Activated CD8-positive, alpha-beta T cell treated with anti-CD3 and anti-CD28 coated beads for 36 hours (primary cell): ENCODE measurements at regions of chr2 and their contacts with region 1.

Region 1: DNA sequence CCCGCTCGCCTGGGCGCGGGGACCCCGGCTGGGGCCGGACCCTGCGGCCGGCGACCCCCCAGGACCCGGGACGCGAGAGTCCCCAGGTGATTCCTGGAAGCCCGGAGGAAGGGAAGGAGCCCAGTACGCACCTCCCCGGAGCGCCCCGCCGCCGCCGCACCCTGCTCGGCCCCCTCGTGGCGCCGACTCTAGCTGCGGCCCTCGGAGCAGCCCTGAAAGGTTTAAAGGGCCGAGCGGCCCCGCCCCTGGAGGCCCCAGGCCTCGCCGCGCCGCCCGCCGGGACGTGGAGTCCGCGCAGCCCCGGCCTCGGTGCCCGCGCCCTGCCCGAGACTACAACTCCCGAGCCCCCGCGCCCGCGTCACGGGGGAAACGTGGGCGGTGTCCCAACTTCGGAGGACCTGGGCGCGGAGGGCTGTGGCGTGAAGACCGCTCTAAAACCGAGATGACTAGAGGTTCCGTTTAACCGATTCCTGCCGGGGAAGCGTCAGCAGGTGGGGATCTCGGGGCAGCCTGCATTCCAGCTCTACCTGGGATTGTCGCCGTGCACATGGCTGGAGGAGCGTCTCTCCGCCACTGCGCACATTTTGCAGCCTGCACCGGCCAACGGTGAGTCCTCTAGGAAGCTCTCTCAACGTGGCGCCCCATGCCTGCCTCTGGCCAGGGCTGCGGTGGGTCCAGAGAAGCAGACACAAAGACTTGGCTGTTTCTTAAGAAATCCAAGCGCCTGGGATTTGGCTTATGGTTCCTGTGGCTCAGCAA is at the start of gene TMEM150A:
- DNase-seq: peak; percentile 95
- ATAC-seq: peak; percentile 97
- H3K4me3 Mint-ChIP-seq: peak within 1 kb of the TSS; percentile 83
- H3K27ac Mint-ChIP-seq: peak within 1 kb of the TSS; percentile 60
- H3K4me1 Mint-ChIP-seq: peaks cover 44% of the 10 kb centered on the region
- H3K27me3 Mint-ChIP-seq: no peaks in the 10 kb centered on the region
- CTCF ChIP-seq: peak; percentile 35
- total RNA-seq, gene TMEM150A: 1.0 to 1.2 TPM

Region 2: GRCh38 chr2:85584857-85585783 is 17.5 kb before region 1 on chr2:
- CTCF ChIA-PET with region 1: interaction called, 3 read pairs
- POLR2A ChIA-PET with region 1: interaction called, 13 read pairs
- intact Hi-C with region 1: no loop called
- DNase-seq: peak; percentile 33
- ATAC-seq: peak; percentile 70
- H3K4me3 Mint-ChIP-seq: peak overlapping the region; percentile 81
- H3K27ac Mint-ChIP-seq: peak overlapping the region; percentile 91
- H3K4me1 Mint-ChIP-seq: peaks cover 40% of the 10 kb centered on the region
- H3K27me3 Mint-ChIP-seq: no peaks in the 10 kb centered on the region
- CTCF ChIP-seq: no peak

Region 3: GRCh38 chr2:85589982-85590791 is 12.5 kb before region 1 on chr2:
- CTCF ChIA-PET with region 1: interaction called, 6 read pairs
- POLR2A ChIA-PET with region 1: interaction called, 13 read pairs
- intact Hi-C with region 1: no loop called
- DNase-seq: no peak
- ATAC-seq: no peak
- H3K4me3 Mint-ChIP-seq: no peak overlapping the region
- H3K27ac Mint-ChIP-seq: no peak overlapping the region
- H3K4me1 Mint-ChIP-seq: peaks cover 24% of the 10 kb centered on the region
- H3K27me3 Mint-ChIP-seq: no peaks in the 10 kb centered on the region
- CTCF ChIP-seq: no peak

Region 4: GRCh38 chr2:85642725-85643124 is 40.1 kb after region 1 on chr2:
- CTCF ChIA-PET with region 1: interaction called, 14 read pairs
- POLR2A ChIA-PET with region 1: no interaction called
- intact Hi-C with region 1: no loop called
- DNase-seq: peak; percentile 27
- ATAC-seq: peak; percentile 72
- H3K4me3 Mint-ChIP-seq: no peak overlapping the region
- H3K27ac Mint-ChIP-seq: peak overlapping the region; percentile 70
- H3K4me1 Mint-ChIP-seq: peaks cover 12% of the 10 kb centered on the region
- H3K27me3 Mint-ChIP-seq: no peaks in the 10 kb centered on the region
- CTCF ChIP-seq: no peak